Panc1 (cell line): ENCODE measurements at regions of chr1 and their contacts with region 1.

Region 1: GRCh38 chr1:244802041-244802440 is 33.4 kb upstream of the COX20 start:
- DNase-seq: no peak
- ATAC-seq: peak; percentile 64
- H3K4me3 ChIP-seq: no peak overlapping the region
- H3K27ac ChIP-seq: no peak overlapping the region
- H3K4me1 ChIP-seq: no peaks in the 10 kb centered on the region
- H3K27me3 ChIP-seq: no peaks in the 10 kb centered on the region
- CTCF ChIP-seq: no peak

Region 2: DNA sequence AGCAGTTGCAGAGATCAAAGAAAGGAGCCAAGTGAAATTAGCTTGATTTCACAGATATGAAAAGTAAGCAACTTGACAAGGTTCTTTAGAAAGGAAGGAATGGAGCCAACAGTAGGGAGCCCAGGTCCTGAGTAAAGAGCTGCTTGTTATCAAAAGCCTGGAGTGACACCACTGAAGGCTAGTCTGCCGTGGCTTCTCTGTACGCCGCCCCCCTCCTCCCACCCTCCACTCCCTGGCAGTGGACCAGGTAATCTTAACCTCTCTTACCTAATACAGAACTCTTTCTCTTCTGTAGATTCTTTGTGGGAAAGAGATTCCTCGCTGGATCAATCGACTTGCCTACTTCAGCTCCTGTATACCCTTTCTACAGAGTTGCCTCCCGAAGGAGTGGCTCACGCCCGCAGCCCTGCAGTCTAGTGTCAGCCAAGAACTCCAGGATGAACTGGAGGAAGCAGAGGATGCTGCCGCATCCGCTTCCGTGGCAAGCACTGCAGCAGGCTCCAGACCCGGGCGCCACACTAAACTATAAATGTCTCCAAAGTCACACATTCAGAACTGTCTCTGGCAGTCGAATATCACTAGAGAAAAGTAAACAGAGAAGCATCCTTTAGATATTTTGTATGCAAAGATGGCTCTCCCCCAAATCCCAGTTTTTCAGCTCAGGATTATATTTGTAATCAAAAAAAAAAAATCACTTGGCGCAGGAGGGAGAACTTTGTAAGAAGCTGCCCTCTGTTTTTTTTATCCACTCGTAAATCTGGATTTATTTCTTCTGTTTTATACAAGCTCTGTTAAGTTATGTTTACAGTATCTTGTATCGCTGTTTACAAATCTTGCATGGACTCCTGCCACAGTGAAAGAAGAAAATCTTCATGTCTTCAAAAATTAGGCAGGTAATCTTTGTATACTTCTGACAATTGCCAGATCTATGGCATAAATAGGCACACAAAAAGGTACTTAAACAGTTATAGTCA is 96.5 kb before region 1 on chr1:
- CTCF ChIA-PET with region 1: no interaction called
- POLR2A ChIA-PET with region 1: interaction called, 16 read pairs
- in situ Hi-C with region 1: no loop called
- intact Hi-C with region 1: no loop called
- DNase-seq: no peak
- ATAC-seq: no peak
- H3K4me3 ChIP-seq: no peak overlapping the region
- H3K27ac ChIP-seq: no peak overlapping the region
- H3K4me1 ChIP-seq: no peaks in the 10 kb centered on the region
- H3K27me3 ChIP-seq: no peaks in the 10 kb centered on the region
- CTCF ChIP-seq: no peak

Region 3: GRCh38 chr1:244874974-244875579 is 73.0 kb after region 1 on chr1:
- CTCF ChIA-PET with region 1: no interaction called
- POLR2A ChIA-PET with region 1: no interaction called
- in situ Hi-C with region 1: no loop called
- intact Hi-C with region 1: no loop called
- DNase-seq: no peak
- ATAC-seq: no peak
- H3K4me3 ChIP-seq: no peak overlapping the region
- H3K27ac ChIP-seq: no peak overlapping the region
- H3K4me1 ChIP-seq: no peaks in the 10 kb centered on the region
- H3K27me3 ChIP-seq: no peaks in the 10 kb centered on the region
- CTCF ChIP-seq: no peak